Activated CD4-positive, alpha-beta memory T cell treated with anti-CD3 and anti-CD28 coated beads for 36 hours (primary cell): ENCODE measurements at regions of chr1 and their contacts with region 1.

Region 1: DNA sequence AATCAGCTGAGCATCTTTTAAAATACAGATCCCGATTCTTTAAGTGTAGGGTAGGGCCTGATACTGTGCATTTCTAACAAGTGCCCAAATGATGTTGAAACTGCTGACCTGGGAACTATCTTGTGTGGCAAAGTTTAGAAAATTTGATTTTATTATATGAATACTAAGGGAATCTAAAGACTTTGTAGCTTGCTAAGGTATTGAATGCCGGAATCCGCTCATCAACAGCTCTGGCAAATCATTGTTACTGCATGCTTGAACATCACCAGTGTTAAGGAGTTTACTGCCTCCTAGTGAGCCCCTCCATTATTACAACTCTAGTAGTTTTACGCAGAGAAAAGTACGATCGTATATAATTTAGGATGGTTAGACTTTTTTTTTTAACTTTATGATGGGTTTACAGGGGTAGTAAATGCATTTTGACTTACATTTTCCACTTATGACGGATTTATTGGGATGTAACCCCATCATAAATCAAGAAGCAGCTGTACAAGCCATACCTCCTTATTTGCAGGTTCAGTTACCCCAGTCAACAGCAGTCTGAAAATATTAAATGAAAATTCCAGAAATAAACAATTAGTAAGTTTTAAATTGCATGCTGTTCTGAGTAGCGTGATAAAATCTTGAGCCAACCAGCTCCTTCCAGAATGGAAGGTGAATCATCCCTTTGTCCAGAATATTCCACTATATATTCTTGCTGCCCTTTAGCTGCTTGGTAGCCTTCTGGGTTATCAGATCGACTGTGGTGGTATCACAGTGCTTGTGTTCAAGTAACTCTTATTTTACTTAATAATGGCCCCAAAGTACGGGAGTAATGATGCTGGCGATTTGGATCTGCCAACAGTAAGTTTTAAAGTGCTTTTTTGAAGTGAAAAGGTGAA is 892 bp downstream of the TYW3 start:
- DNase-seq: peak; percentile 43
- H3K4me3 Mint-ChIP-seq: peak overlapping the region; percentile 87
- H3K27ac Mint-ChIP-seq: peak overlapping the region; percentile 94
- H3K4me1 Mint-ChIP-seq: peaks cover 39% of the 10 kb centered on the region
- H3K27me3 Mint-ChIP-seq: no peaks in the 10 kb centered on the region

Region 2: GRCh38 chr1:74504125-74504932 is 229.5 kb before region 1 on chr1:
- CTCF ChIA-PET with region 1: interaction called, 3 read pairs
- POLR2A ChIA-PET with region 1: no interaction called
- intact Hi-C with region 1: loop called (anchors 1 kb)
- DNase-seq: peak; percentile 62
- H3K4me3 Mint-ChIP-seq: no peak overlapping the region
- H3K27ac Mint-ChIP-seq: no peak overlapping the region
- H3K4me1 Mint-ChIP-seq: peaks cover 3% of the 10 kb centered on the region
- H3K27me3 Mint-ChIP-seq: peaks cover 2% of the 10 kb centered on the region

Region 3: DNA sequence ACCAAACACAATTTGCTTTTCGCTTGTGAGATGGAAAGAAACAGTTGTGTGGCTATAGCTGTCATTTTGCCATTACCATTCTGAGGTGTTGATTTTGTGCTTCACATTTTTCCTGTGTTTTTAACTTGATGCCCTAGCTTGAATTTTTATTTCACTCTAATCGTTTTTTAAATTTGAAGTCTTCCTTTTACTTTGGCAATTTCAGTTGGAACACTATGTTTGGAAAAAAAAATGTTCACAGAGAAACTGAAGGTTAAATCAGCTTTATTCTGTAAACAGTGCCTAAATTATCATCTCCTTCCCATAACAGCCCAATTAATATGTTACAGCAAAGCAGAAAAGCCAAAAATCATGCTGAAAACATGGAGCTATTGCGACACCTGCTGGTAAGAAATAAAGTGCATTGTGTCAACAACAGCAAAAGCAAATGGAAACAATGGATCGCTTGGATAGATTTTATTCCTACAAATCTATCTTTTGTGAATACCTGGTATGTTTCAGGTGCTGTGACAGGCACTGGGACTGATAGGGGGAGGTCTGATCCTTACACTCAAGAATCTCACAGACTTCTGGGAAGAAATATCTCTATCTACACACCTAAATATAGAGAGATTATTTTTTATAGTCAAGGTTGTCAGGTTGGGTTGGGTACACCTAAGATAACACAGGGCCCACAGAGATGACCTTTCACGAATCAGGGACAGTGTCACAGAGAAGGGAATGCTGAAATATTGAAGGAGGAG is 44.1 kb before region 1 on chr1:
- CTCF ChIA-PET with region 1: interaction called, 18 read pairs
- POLR2A ChIA-PET with region 1: no interaction called
- intact Hi-C with region 1: loop called (anchors 2 kb)
- DNase-seq: peak; percentile 42
- H3K4me3 Mint-ChIP-seq: no peak overlapping the region
- H3K27ac Mint-ChIP-seq: no peak overlapping the region
- H3K4me1 Mint-ChIP-seq: no peaks in the 10 kb centered on the region
- H3K27me3 Mint-ChIP-seq: peaks cover 2% of the 10 kb centered on the region

Region 4: DNA sequence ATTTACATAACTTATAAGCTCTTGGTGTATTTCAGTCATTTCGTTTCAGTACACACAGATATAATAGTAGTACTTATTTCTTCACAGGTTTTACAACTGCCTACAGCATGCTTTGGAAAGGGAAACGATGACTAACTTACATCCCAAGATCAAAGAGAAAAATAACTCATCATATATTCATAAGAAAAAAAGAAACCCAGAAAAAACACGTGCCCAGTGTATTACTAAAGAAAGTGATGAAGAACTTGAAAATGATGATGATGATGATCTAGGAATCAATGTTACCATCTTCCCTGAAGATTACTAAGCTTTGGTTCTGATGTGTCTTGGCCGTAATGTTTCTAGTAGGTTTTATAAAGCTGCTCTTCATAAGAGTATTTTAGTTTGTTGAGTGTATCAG is 30.0 kb after region 1 on chr1:
- CTCF ChIA-PET with region 1: interaction called, 17 read pairs
- POLR2A ChIA-PET with region 1: interaction called, 4 read pairs
- intact Hi-C with region 1: loop called (anchors 1 kb)
- DNase-seq: no peak
- H3K4me3 Mint-ChIP-seq: no peak overlapping the region
- H3K27ac Mint-ChIP-seq: peak overlapping the region; percentile 63
- H3K4me1 Mint-ChIP-seq: peaks cover 22% of the 10 kb centered on the region
- H3K27me3 Mint-ChIP-seq: no peaks in the 10 kb centered on the region

Region 5: DNA sequence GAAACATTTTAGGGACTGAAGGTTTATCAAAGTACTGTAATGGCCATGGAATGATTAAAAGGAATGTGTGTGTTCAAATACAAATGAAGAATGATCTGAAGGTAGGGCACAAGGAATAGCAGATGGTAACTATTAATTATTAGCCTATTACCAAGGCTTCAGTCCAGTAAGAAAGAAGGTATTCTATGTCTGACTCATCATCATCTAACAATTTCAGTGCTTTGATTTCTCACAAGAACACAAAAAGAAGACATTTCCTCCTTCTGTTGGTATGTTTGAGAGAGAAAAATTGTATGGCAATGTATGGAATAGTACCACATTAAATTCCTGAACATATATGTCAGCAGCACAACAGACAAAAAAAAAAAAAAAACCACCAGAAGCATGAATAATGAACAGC is 56.6 kb after region 1 on chr1:
- CTCF ChIA-PET with region 1: no interaction called
- POLR2A ChIA-PET with region 1: no interaction called
- intact Hi-C with region 1: no loop called
- DNase-seq: no peak
- H3K4me3 Mint-ChIP-seq: no peak overlapping the region
- H3K27ac Mint-ChIP-seq: no peak overlapping the region
- H3K4me1 Mint-ChIP-seq: no peaks in the 10 kb centered on the region
- H3K27me3 Mint-ChIP-seq: peaks cover 10% of the 10 kb centered on the region

Region 6: DNA sequence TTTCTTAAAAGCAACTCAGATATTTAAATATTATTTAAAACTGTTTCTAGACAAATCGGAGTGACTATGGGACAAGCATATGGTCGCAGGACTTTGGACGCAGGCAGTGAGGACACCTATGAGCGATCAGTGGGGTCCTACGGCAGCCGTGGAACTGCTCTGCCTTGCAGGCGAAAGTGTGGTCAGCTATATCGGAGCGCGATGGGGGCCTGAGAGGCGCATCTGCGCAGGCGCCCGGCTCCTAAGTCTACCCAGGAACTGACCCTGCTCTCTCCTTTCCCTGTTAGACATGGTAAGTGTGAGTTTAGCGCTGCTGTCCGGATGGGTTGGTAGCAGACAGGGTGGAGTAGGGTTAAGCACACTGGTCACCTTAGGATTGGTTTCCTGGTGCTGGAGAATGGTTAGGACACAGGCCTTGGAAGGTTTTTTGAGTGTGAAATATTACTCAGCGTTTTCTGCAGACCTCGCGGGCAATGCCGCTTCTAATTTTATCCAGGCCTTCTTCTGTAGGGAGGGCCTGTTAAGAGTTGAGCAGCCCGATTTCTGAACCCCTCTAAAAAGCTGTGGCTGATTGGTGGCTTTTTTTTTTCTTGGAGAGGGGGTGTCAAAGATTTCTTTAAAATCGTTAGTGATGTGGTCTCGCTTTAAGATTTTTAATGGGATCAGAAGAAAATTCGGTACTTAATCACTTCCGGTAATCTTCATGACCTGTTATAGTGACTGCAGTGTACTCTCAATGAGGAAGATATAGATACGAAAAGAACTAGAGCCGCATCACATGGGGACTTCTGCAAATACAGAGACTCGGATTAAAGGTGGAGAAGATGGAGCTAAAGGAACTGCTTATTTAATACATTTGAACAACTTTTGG is 1052.4 kb after region 1 on chr1 and contains the start of gene RABGGTB:
- CTCF ChIA-PET with region 1: no interaction called
- POLR2A ChIA-PET with region 1: no interaction called
- intact Hi-C with region 1: loop called (anchors 5 kb)
- DNase-seq: peak; percentile 96
- H3K4me3 Mint-ChIP-seq: peak within 1 kb of the TSS; percentile 99
- H3K27ac Mint-ChIP-seq: peak within 1 kb of the TSS; percentile 97
- H3K4me1 Mint-ChIP-seq: peaks cover 28% of the 10 kb centered on the region
- H3K27me3 Mint-ChIP-seq: no peaks in the 10 kb centered on the region
- total RNA-seq, gene RABGGTB: 158 to 170 TPM